ENCODE measurements at regions of chr16 and their contacts with region 1.

Region 1: GRCh38 chr16:24539291-24539849 is at the start of gene RBBP6:
- DNase-seq: peak; percentile 84 to 99 (median 91)
- ATAC-seq: peak; percentile 83
- H3K4me3 ChIP-seq: peak within 1 kb of the TSS; percentile 90
- H3K4me3 Mint-ChIP-seq: peak within 1 kb of the TSS; percentile 100
- H3K27ac ChIP-seq: peak within 1 kb of the TSS; percentile 95 to 97
- H3K27ac Mint-ChIP-seq: peak within 1 kb of the TSS; percentile 100
- H3K4me1 ChIP-seq: peaks cover 16% of the 10 kb centered on the region
- H3K4me1 Mint-ChIP-seq: peaks cover 54% of the 10 kb centered on the region
- H3K27me3 ChIP-seq: no peaks in the 10 kb centered on the region
- H3K27me3 Mint-ChIP-seq: no peaks in the 10 kb centered on the region
- CTCF ChIP-seq: no peak
- total RNA-seq, gene RBBP6: 178 TPM

Region 2: DNA sequence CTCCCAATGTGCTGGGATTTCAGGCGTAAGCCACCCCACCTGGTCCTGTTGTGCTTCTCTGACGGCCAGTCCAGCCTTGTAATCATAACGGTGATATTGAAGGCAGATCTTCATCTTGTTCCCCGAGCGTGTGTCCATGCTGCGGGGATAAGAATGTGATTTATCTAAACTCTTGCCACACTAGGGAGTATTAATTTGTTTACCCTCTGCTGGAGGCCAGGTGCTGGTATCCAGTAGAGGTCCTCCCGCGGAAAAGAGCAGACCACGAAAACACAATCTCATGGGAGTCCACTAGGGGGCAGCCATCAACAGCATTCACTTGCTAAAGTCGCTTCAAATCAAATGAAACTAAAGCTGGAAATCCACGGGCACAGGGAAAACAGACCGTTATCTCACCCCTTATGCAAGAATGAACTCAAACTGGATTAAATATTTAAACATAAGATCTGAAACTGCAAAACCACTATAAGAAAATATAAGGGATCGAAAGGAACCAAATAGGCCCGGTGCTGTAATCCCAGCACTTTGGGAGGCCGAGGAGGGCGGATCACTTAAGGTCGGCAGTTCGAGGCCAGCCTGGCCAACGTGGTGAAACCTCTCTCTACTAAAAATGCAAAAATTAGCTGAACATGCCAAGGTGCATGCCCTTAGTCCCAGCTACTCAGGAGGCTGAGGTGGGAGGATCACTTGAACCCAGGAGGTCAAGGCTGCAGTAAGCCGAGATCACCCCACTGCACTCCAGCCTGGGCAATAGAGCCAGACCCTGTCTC is 22.3 kb before region 1 on chr16:
- CTCF ChIA-PET with region 1: interaction called, 4 read pairs
- POLR2A ChIA-PET with region 1: no interaction called
- intact Hi-C with region 1: loop called in 1 of 2 experiments (anchors 1 kb)
- DNase-seq: peak; percentile 57 to 86 (median 68)
- ATAC-seq: peak; percentile 92
- H3K4me3 ChIP-seq: no peak overlapping the region
- H3K4me3 Mint-ChIP-seq: no peak overlapping the region
- H3K27ac ChIP-seq: no peak overlapping the region
- H3K27ac Mint-ChIP-seq: no peak overlapping the region
- H3K4me1 ChIP-seq: peaks cover 8% of the 10 kb centered on the region
- H3K4me1 Mint-ChIP-seq: peaks cover 6% of the 10 kb centered on the region
- H3K27me3 ChIP-seq: no peaks in the 10 kb centered on the region
- H3K27me3 Mint-ChIP-seq: peaks cover 4% of the 10 kb centered on the region
- CTCF ChIP-seq: peak; percentile 96

Region 3: GRCh38 chr16:24729362-24729984 is 190.1 kb after region 1 on chr16 and contains the start of gene TNRC6A:
- CTCF ChIA-PET with region 1: no interaction called
- POLR2A ChIA-PET with region 1: interaction called, 11 read pairs
- intact Hi-C with region 1: loop called (anchors 2 to 5 kb)
- DNase-seq: peak; percentile 59 to 90 (median 70)
- ATAC-seq: peak; percentile 81
- H3K4me3 ChIP-seq: peak within 1 kb of the TSS; percentile 82
- H3K4me3 Mint-ChIP-seq: peak within 1 kb of the TSS; percentile 100
- H3K27ac ChIP-seq: peak within 1 kb of the TSS; percentile 91 to 96
- H3K27ac Mint-ChIP-seq: peak within 1 kb of the TSS; percentile 99
- H3K4me1 ChIP-seq: peaks cover 15% of the 10 kb centered on the region
- H3K4me1 Mint-ChIP-seq: peaks cover 51% of the 10 kb centered on the region
- H3K27me3 ChIP-seq: no peaks in the 10 kb centered on the region
- H3K27me3 Mint-ChIP-seq: peaks cover 4% of the 10 kb centered on the region
- CTCF ChIP-seq: no peak
- total RNA-seq, gene TNRC6A: 70.4 to 74.6 TPM

Region 4: GRCh38 chr16:25014500-25015147 is 475.3 kb after region 1 on chr16:
- CTCF ChIA-PET with region 1: no interaction called
- POLR2A ChIA-PET with region 1: interaction called, 7 read pairs
- intact Hi-C with region 1: loop called in 1 of 2 experiments (anchors 10 kb)
- DNase-seq: peak in 10 of 14 experiments; percentile 1 to 49 (median 13)
- ATAC-seq: peak; percentile 34
- H3K4me3 ChIP-seq: peak overlapping the region; percentile 89
- H3K4me3 Mint-ChIP-seq: peak overlapping the region; percentile 96
- H3K27ac ChIP-seq: peak overlapping the region; percentile 76 to 78
- H3K27ac Mint-ChIP-seq: peak overlapping the region; percentile 91
- H3K4me1 ChIP-seq: peaks cover 58% of the 10 kb centered on the region
- H3K4me1 Mint-ChIP-seq: peaks cover 79% of the 10 kb centered on the region
- H3K27me3 ChIP-seq: no peaks in the 10 kb centered on the region
- H3K27me3 Mint-ChIP-seq: no peaks in the 10 kb centered on the region
- CTCF ChIP-seq: no peak

Region 5: DNA sequence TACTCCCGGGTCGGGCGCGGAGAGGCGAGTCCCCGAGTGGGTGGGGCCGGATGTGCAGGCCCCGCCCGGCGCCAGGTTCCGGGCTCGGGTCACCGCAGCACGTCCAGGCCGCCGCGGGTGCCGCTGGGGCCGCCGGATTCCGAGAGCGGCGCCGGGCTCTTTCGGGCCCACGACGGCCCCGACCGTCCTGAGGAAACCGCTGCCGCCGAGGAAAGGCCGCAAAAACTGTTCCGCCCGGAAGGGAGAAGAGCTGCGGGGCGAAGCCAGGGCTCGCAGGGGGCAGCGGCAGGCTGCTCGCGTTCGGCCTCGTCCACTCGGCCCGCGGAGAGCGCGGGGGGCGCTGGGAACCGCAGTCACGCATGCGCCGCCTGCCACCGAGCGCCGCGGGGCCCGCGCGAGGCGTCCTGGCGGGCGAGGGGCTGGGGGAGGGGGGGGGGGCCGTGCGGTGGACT is 718.2 kb after region 1 on chr16 and contains the start of gene ZKSCAN2:
- CTCF ChIA-PET with region 1: no interaction called
- POLR2A ChIA-PET with region 1: no interaction called
- intact Hi-C with region 1: loop called in 1 of 2 experiments (anchors 5 kb)
- DNase-seq: peak; percentile 56 to 91 (median 78)
- ATAC-seq: peak; percentile 68
- H3K4me3 ChIP-seq: peak within 1 kb of the TSS; percentile 87
- H3K4me3 Mint-ChIP-seq: peak within 1 kb of the TSS; percentile 96
- H3K27ac ChIP-seq: peak within 1 kb of the TSS; percentile 80 to 92
- H3K27ac Mint-ChIP-seq: peak within 1 kb of the TSS; percentile 94
- H3K4me1 ChIP-seq: peaks cover 39% of the 10 kb centered on the region
- H3K4me1 Mint-ChIP-seq: peaks cover 68% of the 10 kb centered on the region
- H3K27me3 ChIP-seq: no peaks in the 10 kb centered on the region
- H3K27me3 Mint-ChIP-seq: no peaks in the 10 kb centered on the region
- CTCF ChIP-seq: no peak
- total RNA-seq, gene ZKSCAN2: 9.5 to 10.2 TPM